K562 (cell line): ENCODE measurements at regions of chr1 and their contacts with region 1.

Region 1: DNA sequence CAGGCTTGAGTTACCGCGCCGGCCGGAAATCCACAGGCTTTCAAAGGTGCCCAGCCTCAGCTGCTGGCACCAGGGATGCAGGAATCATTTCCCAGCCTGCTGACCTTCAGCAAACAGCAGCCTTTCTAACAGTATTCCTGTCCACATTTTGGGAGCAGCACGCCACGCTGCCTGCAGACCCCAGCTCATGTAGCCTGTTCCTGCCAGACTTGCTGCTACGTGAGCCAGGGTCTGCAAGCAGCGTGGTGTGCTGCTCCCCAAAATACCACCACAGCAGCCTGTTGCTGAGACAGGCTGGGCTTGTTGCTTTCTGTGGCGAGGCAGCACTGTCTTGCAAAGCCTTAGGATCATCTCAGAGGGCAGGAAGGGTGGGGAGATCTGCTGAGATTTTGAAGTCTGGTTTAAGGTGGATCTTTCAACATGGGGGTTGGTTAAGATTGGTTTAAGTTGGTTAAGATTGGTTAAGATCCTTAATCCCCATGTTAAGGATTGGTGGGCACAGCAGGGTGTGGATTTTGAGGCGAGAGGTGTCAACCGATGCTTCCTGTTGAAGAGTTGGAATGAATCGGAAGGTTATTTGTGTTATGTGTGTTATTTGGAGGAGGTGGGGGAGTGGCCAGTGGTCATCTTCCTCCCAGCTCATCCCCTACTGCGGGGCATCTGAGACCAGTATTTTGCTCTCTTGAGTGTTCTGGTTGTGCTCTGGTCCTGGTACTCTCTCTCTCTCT is 12.9 kb downstream of the FAAH start:
- DNase-seq: no peak
- ATAC-seq: no peak
- H3K4me3 ChIP-seq: no peak overlapping the region
- H3K27ac ChIP-seq: no peak overlapping the region
- H3K4me1 ChIP-seq: peaks cover 24 to 51% of the 10 kb centered on the region in 2 experiments; a peak in 4 of 5 replicates
- H3K27me3 ChIP-seq: no peaks in the 10 kb centered on the region
- CTCF ChIP-seq: no peak
- EP300 ChIP-seq: no peak
- POLR2A ChIP-seq: no peak
- RAD21 ChIP-seq: no peak

Region 2: GRCh38 chr1:46333300-46334029 is 73.6 kb before region 1 on chr1:
- CTCF ChIA-PET with region 1: no interaction called
- POLR2A ChIA-PET with region 1: no interaction called
- in situ Hi-C with region 1: no loop called
- intact Hi-C with region 1: loop called (anchors 5 kb)
- DNase-seq: peak in 2 of 4 experiments; percentile 71 to 77
- ATAC-seq: peak; percentile 98
- H3K4me3 ChIP-seq: no peak overlapping the region
- H3K27ac ChIP-seq: no peak overlapping the region
- H3K4me1 ChIP-seq: peaks cover 2 to 5% of the 10 kb centered on the region in 2 experiments; a peak in 4 of 5 replicates
- H3K27me3 ChIP-seq: no peaks in the 10 kb centered on the region
- CTCF ChIP-seq: peak; percentile 67 to 96 (median 80)
- EP300 ChIP-seq: no peak
- POLR2A ChIP-seq: no peak
- RAD21 ChIP-seq: peak; percentile 73 to 86

Region 3: GRCh38 chr1:46477153-46477929 is 70.3 kb after region 1 on chr1:
- CTCF ChIA-PET with region 1: interaction called, 3 read pairs
- POLR2A ChIA-PET with region 1: interaction called, 3 read pairs
- in situ Hi-C with region 1: no loop called
- intact Hi-C with region 1: loop called (anchors 5 kb)
- DNase-seq: peak; percentile 92 to 94 (median 93)
- ATAC-seq: peak; percentile 89
- H3K4me3 ChIP-seq: no peak overlapping the region
- H3K27ac ChIP-seq: no peak overlapping the region
- H3K4me1 ChIP-seq: peaks cover 19 to 27% of the 10 kb centered on the region in 2 experiments
- H3K27me3 ChIP-seq: no peaks in the 10 kb centered on the region
- CTCF ChIP-seq: peak; percentile 97 to 99 (median 99)
- EP300 ChIP-seq: peak; percentile 37; the same call in 1 of the 2 replicates
- POLR2A ChIP-seq: no peak
- RAD21 ChIP-seq: peak; percentile 99 to 100

Region 4: DNA sequence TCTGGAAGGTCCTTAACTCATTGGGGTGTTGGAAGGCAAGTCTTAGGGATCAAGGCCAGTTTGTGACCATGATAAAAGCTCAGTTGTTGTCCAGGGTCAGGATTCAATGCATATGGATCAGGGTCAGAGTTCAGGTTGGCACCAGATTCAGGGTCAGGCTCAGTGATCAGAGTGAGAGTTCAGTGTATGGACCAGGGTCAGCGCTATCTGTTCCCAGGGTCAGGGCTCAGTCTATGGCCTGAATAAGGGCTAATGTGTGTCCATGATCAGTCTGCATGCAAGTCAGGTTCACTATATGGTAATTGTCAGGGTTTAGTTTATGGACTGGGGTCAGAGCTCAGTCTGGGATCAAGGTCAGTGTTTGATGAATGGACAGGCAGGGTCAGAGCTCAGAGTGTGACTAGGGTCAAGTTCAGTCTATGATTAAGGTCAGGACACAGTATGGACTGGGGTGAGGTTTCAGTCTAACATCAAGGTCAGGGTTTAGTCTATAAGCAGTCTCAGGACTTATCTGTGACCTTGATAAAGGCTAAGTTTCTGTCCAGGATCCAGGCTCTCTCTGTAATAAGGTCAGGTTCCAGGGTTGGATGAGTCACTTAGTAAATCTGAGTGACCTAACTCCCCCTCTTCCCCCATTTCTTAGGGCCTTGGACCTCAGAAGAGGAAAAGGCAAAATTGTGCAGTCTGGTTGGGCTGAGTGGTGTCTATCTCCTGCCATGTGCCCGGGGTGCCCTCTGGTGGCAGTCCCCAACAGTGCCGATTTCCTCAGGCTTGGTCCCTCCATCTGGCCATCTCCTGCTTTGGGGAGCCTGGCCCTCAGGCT is 120.6 kb after region 1 on chr1:
- CTCF ChIA-PET with region 1: interaction called, 22 read pairs
- POLR2A ChIA-PET with region 1: interaction called, 5 read pairs
- in situ Hi-C with region 1: no loop called
- intact Hi-C with region 1: loop called (anchors 1 kb)
- DNase-seq: peak; percentile 87 to 94 (median 89)
- ATAC-seq: peak; percentile 87
- H3K4me3 ChIP-seq: no peak overlapping the region
- H3K27ac ChIP-seq: no peak overlapping the region; the same call in 2 of the 3 replicates
- H3K4me1 ChIP-seq: peaks cover 47 to 50% of the 10 kb centered on the region in 2 experiments
- H3K27me3 ChIP-seq: no peaks in the 10 kb centered on the region
- CTCF ChIP-seq: peak; percentile 98 to 99 (median 99)
- EP300 ChIP-seq: peak; percentile 50; the same call in 1 of the 2 replicates
- POLR2A ChIP-seq: no peak
- RAD21 ChIP-seq: peak; percentile 100

Region 5: GRCh38 chr1:46539972-46540371 is 132.9 kb after region 1 on chr1:
- CTCF ChIA-PET with region 1: interaction called, 3 read pairs
- POLR2A ChIA-PET with region 1: interaction called, 4 read pairs
- in situ Hi-C with region 1: loop called (anchors 5 kb)
- intact Hi-C with region 1: no loop called
- DNase-seq: peak in 1 of 4 experiments; percentile 14
- ATAC-seq: no peak
- H3K4me3 ChIP-seq: no peak overlapping the region
- H3K27ac ChIP-seq: no peak overlapping the region
- H3K4me1 ChIP-seq: peaks cover 12 to 22% of the 10 kb centered on the region in 2 experiments
- H3K27me3 ChIP-seq: no peaks in the 10 kb centered on the region
- CTCF ChIP-seq: no peak
- EP300 ChIP-seq: no peak
- POLR2A ChIP-seq: no peak
- RAD21 ChIP-seq: no peak

Region 6: DNA sequence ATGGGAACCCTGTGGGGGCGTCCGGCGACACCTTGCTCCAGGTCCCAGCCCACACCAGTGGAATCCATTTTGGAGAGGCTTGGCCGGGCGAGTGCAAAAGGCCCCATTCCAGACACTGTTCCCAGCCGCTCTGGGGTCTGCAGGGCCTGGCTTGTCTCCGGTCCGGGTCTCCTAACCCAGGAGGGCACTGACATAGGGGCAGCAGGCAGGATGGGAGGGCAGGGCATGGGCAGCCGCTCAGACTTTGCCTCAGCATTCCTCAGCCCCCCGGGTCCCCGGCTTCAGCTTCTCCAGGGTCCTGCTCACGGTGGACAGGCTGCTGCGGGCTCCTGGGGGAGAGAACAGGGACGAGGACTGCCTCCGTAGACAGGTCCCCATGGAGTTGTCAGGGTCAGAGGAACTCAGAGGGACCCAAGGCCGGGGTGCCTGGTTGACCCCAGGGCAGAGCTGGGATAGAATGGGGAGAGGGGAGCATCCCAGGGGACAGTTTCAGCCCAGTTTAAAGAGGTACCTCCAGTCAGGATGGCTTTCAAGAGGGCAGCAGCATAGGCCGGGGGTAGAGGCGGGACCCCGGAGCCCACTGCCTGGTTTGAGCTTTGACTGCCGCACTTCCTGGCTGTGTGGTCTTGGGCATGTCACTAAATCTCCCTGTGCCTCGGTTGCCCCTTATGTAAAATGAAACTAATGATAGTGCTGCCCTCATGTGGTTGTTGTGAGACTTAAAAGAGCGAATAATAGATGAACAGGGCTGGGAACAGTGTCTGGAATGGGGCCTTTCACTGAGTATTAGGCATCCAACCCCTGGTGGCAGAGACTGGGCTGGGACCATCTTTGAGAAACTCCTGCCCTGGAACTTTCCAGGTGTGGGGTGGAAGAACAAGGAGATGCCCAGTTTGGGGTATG is 140.7 kb after region 1 on chr1:
- CTCF ChIA-PET with region 1: interaction called, 12 read pairs
- POLR2A ChIA-PET with region 1: no interaction called
- in situ Hi-C with region 1: no loop called
- intact Hi-C with region 1: no loop called
- DNase-seq: peak; percentile 48 to 84 (median 52)
- ATAC-seq: peak; percentile 63
- H3K4me3 ChIP-seq: no peak overlapping the region
- H3K27ac ChIP-seq: no peak overlapping the region
- H3K4me1 ChIP-seq: peaks cover 33 to 60% of the 10 kb centered on the region in 2 experiments
- H3K27me3 ChIP-seq: peaks cover 12 to 26% of the 10 kb centered on the region in 2 experiments; a peak in 3 of 5 replicates
- CTCF ChIP-seq: peak; percentile 68 to 83 (median 83)
- EP300 ChIP-seq: no peak
- POLR2A ChIP-seq: no peak
- RAD21 ChIP-seq: peak; percentile 58 to 84